AG04449 (cell line): ENCODE measurements at regions of chr17 and their contacts with region 1.

Region 1: DNA sequence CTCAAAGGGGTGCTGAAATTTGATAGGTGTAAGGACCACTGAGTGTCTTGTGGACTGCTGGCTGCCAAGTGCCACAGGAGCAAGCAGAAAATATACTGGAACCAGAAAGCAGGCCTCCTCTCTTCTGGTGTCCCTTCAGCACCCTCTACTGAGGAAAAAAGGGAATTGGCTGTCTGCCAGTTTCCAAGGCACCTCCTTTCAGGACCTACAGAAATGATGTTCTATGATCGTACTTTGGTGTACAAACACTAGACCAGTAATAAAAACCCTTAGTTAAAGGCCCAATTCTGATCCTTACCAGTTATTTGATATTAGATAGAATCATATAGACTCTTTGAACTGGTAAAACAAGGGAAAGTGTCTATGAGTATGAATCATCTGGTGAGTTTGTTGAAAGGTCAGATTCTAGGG is 35.8 kb upstream of the BCAS3 start:
- DNase-seq: no peak
- H3K4me3 ChIP-seq: no peak overlapping the region
- CTCF ChIP-seq: peak; percentile 57

Region 2: GRCh38 chr17:60442271-60443173 is 199.3 kb before region 1 on chr17:
- CTCF ChIA-PET with region 1: interaction called, 27 read pairs
- POLR2A ChIA-PET with region 1: no interaction called
- DNase-seq: no peak
- H3K4me3 ChIP-seq: no peak overlapping the region
- CTCF ChIP-seq: no peak

Region 3: DNA sequence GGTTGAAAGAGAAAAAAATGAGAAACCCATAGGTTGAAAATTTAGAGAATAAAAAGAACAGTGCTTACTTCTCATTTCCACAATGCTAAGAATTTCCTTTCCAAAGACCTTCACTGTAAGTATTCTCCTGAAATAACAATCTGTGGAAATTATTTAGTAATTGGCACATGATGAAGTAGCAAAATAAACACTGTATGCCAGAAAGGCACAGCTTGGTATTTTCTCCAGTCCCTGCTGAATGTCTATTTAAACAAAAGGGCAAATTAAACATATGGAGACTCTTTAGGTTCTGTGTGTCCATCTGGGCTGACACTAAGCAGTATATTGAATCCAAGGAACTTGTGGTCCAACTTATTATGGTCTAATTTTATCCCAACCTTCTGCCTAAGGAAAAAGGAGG is 173.4 kb before region 1 on chr17:
- CTCF ChIA-PET with region 1: interaction called, 27 read pairs
- POLR2A ChIA-PET with region 1: no interaction called
- DNase-seq: no peak
- H3K4me3 ChIP-seq: no peak overlapping the region
- CTCF ChIP-seq: no peak

Region 4: DNA sequence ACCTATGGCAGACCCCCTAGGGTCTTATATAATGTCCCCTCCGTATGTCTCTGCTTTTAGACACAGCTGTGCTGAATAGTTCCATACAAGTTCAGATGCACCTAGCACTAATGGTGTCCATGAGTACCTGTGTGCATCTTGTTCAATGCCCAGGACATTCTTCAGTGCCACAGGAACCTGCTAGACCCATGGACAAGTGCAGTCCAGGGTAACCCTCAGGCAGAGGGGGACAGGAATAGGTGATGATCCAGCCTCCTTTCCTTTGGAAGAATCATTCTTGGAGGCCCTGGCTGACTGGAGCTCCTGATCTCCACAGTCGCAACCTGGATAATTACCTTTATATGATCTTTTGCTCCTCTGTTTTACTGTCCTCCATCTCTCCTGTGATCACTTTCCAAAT is 70.3 kb before region 1 on chr17:
- CTCF ChIA-PET with region 1: interaction called, 30 read pairs
- POLR2A ChIA-PET with region 1: no interaction called
- DNase-seq: no peak
- H3K4me3 ChIP-seq: no peak overlapping the region
- CTCF ChIP-seq: no peak

Region 5: GRCh38 chr17:60599620-60600489 is 42.0 kb before region 1 on chr17 and contains the start of gene PPM1D:
- CTCF ChIA-PET with region 1: interaction called, 23 read pairs
- POLR2A ChIA-PET with region 1: no interaction called
- DNase-seq: peak; percentile 84
- H3K4me3 ChIP-seq: peak within 1 kb of the TSS; percentile 96
- CTCF ChIP-seq: no peak

Region 6: DNA sequence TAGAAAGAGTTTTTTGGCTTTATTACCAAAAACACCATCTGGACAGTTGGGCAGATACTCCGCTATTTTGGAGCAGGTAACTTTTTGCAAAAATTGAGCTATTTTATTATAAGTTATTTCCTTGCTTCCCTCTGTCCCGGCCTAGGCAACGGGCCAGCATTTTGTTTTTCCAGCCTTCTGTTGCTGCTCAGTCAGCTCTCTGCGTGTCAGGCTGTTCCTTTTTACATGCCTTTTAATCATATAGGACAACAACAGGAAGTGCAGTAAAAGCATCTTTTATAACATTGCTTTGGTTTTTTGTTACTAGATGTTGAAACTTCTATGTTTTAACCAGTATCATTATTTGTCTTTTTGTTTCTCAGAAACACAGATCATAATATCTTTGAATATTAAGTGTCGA is 11.5 kb before region 1 on chr17:
- CTCF ChIA-PET with region 1: interaction called, 94 read pairs
- POLR2A ChIA-PET with region 1: no interaction called
- DNase-seq: no peak
- H3K4me3 ChIP-seq: no peak overlapping the region
- CTCF ChIP-seq: no peak

Region 7: DNA sequence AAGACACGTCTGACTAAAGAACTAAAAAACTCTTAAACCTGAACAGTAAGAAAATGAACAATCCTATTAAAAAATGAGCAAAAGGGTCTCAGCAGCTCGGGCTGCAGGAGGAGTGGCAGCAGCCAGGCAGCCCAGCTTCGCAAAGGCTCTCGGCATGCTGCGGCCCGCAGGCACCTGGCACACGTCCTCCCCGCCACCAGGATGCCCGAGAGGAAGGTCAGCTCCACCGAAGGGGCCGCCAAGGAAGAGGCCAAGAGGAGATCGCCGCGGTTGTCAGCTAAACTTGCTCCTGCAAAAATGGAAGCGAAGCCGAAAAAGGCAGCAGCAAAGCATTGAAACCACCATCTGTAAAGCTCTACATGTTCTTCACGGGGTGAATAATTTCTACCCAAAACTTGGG is 209.4 kb after region 1 on chr17:
- CTCF ChIA-PET with region 1: no interaction called
- POLR2A ChIA-PET with region 1: no interaction called
- DNase-seq: no peak
- H3K4me3 ChIP-seq: no peak overlapping the region
- CTCF ChIP-seq: no peak